Heart left ventricle (tissue), 16 donors: ENCODE measurements at regions of chr6 and their contacts with region 1.

Region 1: GRCh38 chr6:43951063-43951755 is 176.0 kb downstream of the MRPL14 start:
- DNase-seq: peak in 4 of 5 donors; percentile 58 to 83 (median 67)
- ATAC-seq: peak; percentile 49 to 67 (median 55)
- H3K4me3 ChIP-seq: no peak overlapping the region
- H3K27ac ChIP-seq: peak overlapping the region in 6 of 12 donors; percentile 24 to 98 (median 72)
- H3K4me1 ChIP-seq: peaks cover 0 to 33% (median 4%) of the 10 kb centered on the region in 12 donors
- H3K27me3 ChIP-seq: peaks cover 0 to 7% (median 0%) of the 10 kb centered on the region in 9 donors
- CTCF ChIP-seq: peak; percentile 29 to 66 (median 50)
- POLR2A ChIP-seq: no peak

Region 2: GRCh38 chr6:43723737-43724295 is 227.4 kb before region 1 on chr6:
- intact Hi-C with region 1: loop called in 1 of 10 experiments (anchors 5 kb)
- DNase-seq: peak; percentile 60 to 72 (median 66)
- ATAC-seq: peak; percentile 66 to 88 (median 81)
- H3K4me3 ChIP-seq: no peak overlapping the region
- H3K27ac ChIP-seq: no peak overlapping the region
- H3K4me1 ChIP-seq: peaks cover 3 to 21% (median 6%) of the 10 kb centered on the region in 12 donors
- H3K27me3 ChIP-seq: no peaks in the 10 kb centered on the region
- CTCF ChIP-seq: peak; percentile 46 to 72 (median 58)
- POLR2A ChIP-seq: no peak

Region 3: GRCh38 chr6:43838276-43839036 is 112.8 kb before region 1 on chr6:
- intact Hi-C with region 1: loop called in 1 of 10 experiments (anchors 10 kb)
- DNase-seq: peak; percentile 17 to 76 (median 61)
- ATAC-seq: peak; percentile 39 to 87 (median 80)
- H3K4me3 ChIP-seq: no peak overlapping the region
- H3K27ac ChIP-seq: peak overlapping the region in 5 of 12 donors; percentile 14 to 63 (median 36)
- H3K4me1 ChIP-seq: peaks cover 0 to 19% (median 2%) of the 10 kb centered on the region in 12 donors
- H3K27me3 ChIP-seq: no peaks in the 10 kb centered on the region
- CTCF ChIP-seq: peak in 11 of 12 donors; percentile 36 to 65 (median 47)
- POLR2A ChIP-seq: no peak

Region 4: DNA sequence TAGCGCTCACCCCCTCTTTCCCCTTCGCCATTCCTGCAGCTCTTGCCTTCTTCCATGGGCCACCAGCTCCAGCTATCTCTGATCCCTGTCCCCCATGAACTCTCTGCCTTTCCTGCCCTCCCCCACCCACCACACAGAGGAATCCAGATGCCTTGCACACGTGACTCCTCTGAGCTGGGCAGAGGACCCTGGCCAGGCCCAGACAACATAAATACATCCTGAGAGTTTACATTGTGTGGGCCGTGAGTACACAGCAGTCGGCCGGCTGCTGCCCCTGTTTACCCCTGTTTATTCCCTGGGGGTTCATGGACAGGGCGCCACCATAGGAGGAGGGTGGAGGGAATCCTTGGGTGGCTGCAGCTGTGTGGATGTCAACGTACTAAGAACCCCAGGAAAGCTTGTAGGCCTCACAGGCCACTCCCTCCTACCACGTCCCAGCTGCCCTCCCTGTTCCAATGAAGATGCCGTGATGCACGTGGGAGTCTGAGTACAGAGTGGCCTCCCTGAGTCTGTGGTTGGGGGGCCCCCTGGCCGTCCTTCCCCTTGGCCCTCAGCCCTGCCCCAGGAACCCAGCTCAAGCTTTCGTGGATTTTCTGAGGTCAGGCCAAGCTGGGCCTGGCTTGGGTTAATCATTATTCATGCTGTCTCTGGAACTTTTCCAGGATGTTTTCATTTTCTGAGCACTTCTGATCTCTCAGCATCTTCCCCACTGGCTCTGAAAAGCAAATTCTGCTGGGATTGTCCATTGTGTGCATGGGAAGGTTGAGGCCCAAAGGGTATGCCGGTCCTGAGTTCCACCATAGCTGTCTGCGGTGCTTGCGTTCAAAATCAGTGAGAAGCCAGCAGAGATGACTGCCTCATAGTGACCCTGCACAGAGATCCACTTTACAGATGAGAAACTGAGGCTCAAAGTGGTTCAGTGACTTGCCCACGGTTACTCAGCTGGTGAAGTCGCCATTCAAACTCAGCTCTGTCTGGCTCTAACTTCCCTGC is 39.7 kb after region 1 on chr6:
- intact Hi-C with region 1: loop called in 3 of 10 experiments (anchors 1 to 5 kb)
- DNase-seq: peak in 1 of 5 donors; percentile 61
- ATAC-seq: peak in 2 of 4 donors; percentile 14 to 19
- H3K4me3 ChIP-seq: no peak overlapping the region
- H3K27ac ChIP-seq: peak overlapping the region; percentile 73 to 98 (median 86)
- H3K4me1 ChIP-seq: peaks cover 0 to 55% (median 20%) of the 10 kb centered on the region in 12 donors
- H3K27me3 ChIP-seq: no peaks in the 10 kb centered on the region
- CTCF ChIP-seq: no peak
- POLR2A ChIP-seq: no peak